Stomach (tissue), 19 donors: ENCODE measurements at regions of chr20 and their contacts with region 1.

Region 1: DNA sequence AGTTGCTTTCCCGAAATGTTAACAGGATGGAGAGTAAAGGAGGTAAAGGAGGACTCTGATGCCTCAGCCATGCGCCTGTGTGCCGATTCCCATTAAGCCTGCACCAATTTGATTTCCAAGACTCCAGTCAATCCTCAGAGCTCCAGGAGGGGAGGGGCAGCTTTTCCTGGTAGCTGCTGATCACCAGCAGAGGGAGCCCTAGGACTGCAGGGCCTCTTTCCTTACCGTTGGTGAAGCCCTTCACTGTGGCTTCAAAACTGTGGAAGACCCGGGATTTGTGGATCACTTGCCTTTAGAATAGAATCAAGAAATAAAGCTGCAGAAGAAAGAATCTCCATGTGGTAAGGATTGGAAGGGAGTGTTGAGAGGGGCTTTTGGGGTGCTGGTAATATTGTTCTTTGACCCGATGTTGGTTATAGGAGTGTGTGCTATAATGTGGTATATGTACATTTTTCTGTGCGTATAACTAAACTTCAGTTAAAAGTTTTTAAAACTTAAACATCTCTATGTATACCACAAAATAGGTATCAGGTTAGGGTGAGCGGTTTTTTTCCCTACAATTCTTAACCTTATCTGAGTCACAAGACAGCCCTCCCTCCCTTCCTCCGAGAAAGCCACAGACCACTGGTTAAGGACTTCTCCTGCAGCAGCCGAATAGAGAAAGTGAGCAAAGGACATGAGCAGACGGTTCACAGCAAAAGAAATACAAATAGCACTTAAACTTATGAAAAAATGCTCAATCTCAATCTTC is 6.9 kb upstream of the OSER1 start:
- DNase-seq: peak; percentile 81 to 88
- H3K4me3 ChIP-seq: no peak overlapping the region
- H3K27ac ChIP-seq: peak overlapping the region in 1 of 5 donors; percentile 20
- H3K4me1 ChIP-seq: peaks cover 0 to 40% (median 14%) of the 10 kb centered on the region in 4 donors
- H3K27me3 ChIP-seq: no peaks in the 10 kb centered on the region
- CTCF ChIP-seq: peak in 5 of 7 experiments; percentile 75 to 90 (median 86)
- EP300 ChIP-seq: no peak
- POLR2A ChIP-seq: no peak

Region 2: GRCh38 chr20:44080646-44081267 is 136.8 kb before region 1 on chr20:
- intact Hi-C with region 1: no loop called
- DNase-seq: peak; percentile 82 to 91
- H3K4me3 ChIP-seq: no peak overlapping the region
- H3K27ac ChIP-seq: no peak overlapping the region
- H3K4me1 ChIP-seq: peaks cover 0 to 12% (median 5%) of the 10 kb centered on the region in 4 donors
- H3K27me3 ChIP-seq: no peaks in the 10 kb centered on the region
- CTCF ChIP-seq: peak in 6 of 7 experiments; percentile 90 to 100 (median 99)
- EP300 ChIP-seq: no peak
- POLR2A ChIP-seq: no peak

Region 3: GRCh38 chr20:44309763-44310663 is 92.5 kb after region 1 on chr20:
- intact Hi-C with region 1: loop called (anchors 5 kb)
- DNase-seq: peak in 1 of 2 donors; percentile 47
- H3K4me3 ChIP-seq: peak overlapping the region; percentile 88 to 99 (median 92)
- H3K27ac ChIP-seq: peak overlapping the region in 4 of 5 donors; percentile 73 to 87 (median 79)
- H3K4me1 ChIP-seq: peaks cover 5 to 31% (median 24%) of the 10 kb centered on the region in 4 donors
- H3K27me3 ChIP-seq: no peaks in the 10 kb centered on the region
- CTCF ChIP-seq: no peak
- EP300 ChIP-seq: no peak
- POLR2A ChIP-seq: no peak